ENCODE measurements at regions of chr7 and their contacts with region 1.

Region 1: DNA sequence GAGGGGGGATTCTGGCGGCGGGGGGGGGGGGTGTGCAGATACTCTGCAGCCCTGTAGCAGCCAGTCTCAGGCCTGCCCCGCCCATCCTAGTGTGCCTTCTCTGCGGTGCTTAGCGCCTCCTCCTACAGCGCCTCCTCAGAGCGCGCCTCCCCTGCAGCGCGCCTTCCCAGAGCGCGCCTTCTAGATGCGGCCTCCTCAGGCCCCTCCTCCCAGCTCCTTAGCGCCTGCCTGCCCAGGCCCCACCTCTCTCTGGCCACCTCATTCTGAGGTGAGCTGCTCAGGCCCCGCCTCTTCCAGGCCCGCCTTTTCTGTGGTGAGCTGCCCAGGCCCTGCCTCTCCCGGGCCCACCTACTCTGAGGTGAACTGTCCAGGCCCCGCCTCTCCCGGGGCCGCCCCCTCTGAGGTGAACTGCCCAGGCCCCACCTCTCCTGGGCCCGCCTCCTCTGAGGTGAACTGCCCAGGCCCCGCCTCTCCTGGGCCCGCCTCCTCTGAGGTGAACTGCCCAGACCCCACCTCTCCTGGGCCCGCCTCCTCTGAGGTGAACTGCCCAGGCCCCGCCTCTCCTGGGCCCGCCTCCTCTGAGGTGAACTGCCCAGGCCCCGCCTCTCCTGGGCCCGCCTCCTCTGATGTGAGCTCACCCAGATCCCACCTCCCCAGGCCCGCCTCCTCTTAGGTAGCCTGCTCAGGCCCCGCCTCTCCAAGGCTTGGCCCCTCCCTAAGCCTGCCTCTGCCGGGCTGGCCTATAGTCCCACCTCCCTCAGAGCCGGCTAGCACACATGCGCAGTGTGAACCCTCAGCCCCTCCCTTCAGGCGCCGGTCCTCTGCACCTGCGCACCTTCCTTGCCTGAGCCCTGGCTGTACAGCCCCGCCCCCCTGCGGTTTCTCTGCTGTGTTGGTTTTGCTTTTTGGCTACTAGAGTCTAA is 2.1 kb upstream of the SGCE start:
- DNase-seq: peak; percentile 96
- H3K4me3 ChIP-seq: peak overlapping the region in 2 of 3 experiments; percentile 37 to 49
- H3K27ac ChIP-seq: no peak overlapping the region
- H3K4me1 ChIP-seq: no peaks in the 10 kb centered on the region
- H3K27me3 ChIP-seq: no peaks in the 10 kb centered on the region
- CTCF ChIP-seq: peak in 1 of 2 donors; percentile 6

Region 2: GRCh38 chr7:94449148-94449725 is 208.8 kb before region 1 on chr7:
- CTCF ChIA-PET with region 1: interaction called, 4 read pairs
- dilution Hi-C with region 1: no loop called
- in situ Hi-C with region 1: no loop called
- intact Hi-C with region 1: loop called (anchors 1 kb)
- DNase-seq: peak; percentile 24
- H3K4me3 ChIP-seq: no peak overlapping the region
- H3K27ac ChIP-seq: no peak overlapping the region
- H3K4me1 ChIP-seq: no peaks in the 10 kb centered on the region
- H3K27me3 ChIP-seq: peaks cover 3% of the 10 kb centered on the region
- CTCF ChIP-seq: peak; percentile 45 to 65

Region 3: DNA sequence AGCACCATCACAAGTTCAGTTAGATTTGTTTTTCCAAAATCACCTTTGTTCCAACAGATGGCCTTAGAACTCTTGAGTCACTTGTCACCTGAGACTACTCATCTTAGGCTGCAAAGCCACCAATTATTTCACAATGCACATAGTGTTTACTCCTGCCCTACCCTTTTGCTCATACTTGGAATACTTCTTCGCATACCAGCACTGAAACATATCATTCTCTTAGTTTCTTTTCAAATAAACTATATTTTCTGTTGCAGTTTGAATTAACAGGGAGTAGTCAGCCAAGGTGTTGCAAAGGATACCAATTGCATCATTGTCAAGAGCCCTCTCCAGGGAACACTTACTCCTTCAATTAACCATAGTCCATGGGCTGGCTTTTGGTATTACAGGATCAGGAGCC is 77.4 kb before region 1 on chr7:
- CTCF ChIA-PET with region 1: no interaction called
- dilution Hi-C with region 1: no loop called
- in situ Hi-C with region 1: no loop called
- intact Hi-C with region 1: loop called (anchors 2 kb)
- DNase-seq: peak; percentile 31
- H3K4me3 ChIP-seq: no peak overlapping the region
- H3K27ac ChIP-seq: no peak overlapping the region
- H3K4me1 ChIP-seq: peaks cover 9% of the 10 kb centered on the region
- H3K27me3 ChIP-seq: no peaks in the 10 kb centered on the region
- CTCF ChIP-seq: no peak

Region 4: GRCh38 chr7:94687076-94687475 is 29.0 kb after region 1 on chr7:
- CTCF ChIA-PET with region 1: no interaction called
- dilution Hi-C with region 1: no loop called
- in situ Hi-C with region 1: no loop called
- intact Hi-C with region 1: no loop called
- DNase-seq: no peak
- H3K4me3 ChIP-seq: no peak overlapping the region
- H3K27ac ChIP-seq: no peak overlapping the region
- H3K4me1 ChIP-seq: peaks cover 3% of the 10 kb centered on the region
- H3K27me3 ChIP-seq: no peaks in the 10 kb centered on the region
- CTCF ChIP-seq: no peak

Region 5: DNA sequence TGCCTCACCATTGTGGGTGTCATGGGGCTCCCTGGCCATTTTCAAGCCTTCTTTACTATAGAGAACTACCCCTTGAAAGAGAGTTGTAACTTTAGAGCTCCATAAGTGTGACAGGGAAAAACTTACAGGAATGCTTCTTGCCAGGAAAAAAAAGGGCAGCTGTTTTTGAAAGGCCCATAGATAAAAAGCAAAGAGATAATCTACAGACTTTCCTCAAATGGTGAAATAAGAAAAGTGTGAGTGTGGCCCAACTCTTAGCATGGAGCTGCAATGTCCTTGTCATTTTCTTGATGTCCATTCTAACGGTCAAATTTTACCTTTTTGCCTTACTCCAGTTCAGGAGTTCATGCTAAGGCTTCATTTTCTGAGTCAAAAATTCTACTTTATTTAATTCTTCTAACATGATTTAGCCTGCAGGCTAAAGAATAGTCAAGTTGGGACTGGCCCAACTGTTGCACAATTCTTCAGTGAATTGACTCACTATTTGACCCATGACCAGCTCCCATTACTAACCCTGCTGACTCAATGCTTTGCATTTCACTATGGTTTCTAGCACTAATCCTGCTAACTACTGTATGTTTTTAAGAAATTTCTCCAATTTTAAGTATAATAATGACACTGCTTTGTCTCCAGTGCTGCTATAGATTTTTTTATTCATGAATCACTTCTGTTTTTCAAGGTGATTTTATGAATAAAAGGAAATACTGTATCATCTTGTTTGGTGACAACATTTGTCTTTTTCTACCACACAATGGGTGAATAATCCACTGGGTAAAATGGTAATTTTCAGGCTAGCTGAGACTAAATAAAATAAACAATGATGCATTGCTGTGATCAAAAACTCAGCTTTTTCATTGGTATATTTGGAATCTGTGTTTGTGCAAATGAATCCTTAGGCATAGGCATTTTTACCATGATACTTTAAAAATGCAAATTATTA is 39.3 kb after region 1 on chr7:
- CTCF ChIA-PET with region 1: no interaction called
- dilution Hi-C with region 1: no loop called
- in situ Hi-C with region 1: no loop called
- intact Hi-C with region 1: loop called (anchors 2 kb)
- DNase-seq: peak; percentile 90
- H3K4me3 ChIP-seq: no peak overlapping the region
- H3K27ac ChIP-seq: peak overlapping the region; percentile 95
- H3K4me1 ChIP-seq: peaks cover 38% of the 10 kb centered on the region
- H3K27me3 ChIP-seq: peaks cover 2% of the 10 kb centered on the region
- CTCF ChIP-seq: no peak

Region 6: GRCh38 chr7:95045236-95045923 is 387.3 kb after region 1 on chr7:
- CTCF ChIA-PET with region 1: no interaction called
- dilution Hi-C with region 1: no loop called
- in situ Hi-C with region 1: no loop called
- intact Hi-C with region 1: loop called (anchors 5 kb)
- DNase-seq: peak; percentile 1
- H3K4me3 ChIP-seq: no peak overlapping the region
- H3K27ac ChIP-seq: no peak overlapping the region
- H3K4me1 ChIP-seq: no peaks in the 10 kb centered on the region
- H3K27me3 ChIP-seq: peaks cover 2% of the 10 kb centered on the region
- CTCF ChIP-seq: peak in 1 of 2 donors; percentile 46

Region 7: DNA sequence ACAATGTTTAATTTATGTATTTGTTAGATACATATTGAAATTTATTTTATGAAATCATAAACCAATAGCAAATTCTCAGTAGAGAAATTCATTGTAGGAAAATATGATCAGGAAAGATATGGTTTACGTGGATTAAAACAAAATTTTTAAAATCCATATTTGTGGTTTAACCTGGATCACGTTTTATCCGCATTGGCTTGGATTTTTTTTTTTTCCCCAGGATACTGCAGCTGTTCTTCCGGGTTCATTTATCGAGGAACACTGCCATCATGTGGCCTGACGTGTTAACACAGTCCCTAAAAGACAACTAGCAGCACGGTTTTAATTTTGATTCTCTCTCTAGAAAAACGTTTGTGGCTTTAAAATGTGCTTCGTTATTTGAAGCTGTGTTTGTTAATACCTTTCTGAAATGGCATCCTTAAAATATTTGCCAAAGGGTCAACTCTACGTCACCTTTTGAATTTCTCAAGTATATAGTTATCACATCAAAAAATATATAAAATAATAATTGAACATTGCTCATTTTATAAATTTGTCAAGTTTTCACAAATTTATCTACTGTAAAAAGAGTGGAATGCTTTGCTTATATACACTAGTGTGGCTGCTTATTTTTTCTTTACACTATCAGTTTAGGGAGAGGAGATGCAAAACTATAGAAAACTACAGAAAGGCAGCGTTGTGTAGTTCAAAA is 819.0 kb after region 1 on chr7:
- CTCF ChIA-PET with region 1: no interaction called
- dilution Hi-C with region 1: no loop called
- in situ Hi-C with region 1: no loop called
- intact Hi-C with region 1: loop called (anchors 10 kb)
- DNase-seq: peak; percentile 37
- H3K4me3 ChIP-seq: no peak overlapping the region
- H3K27ac ChIP-seq: no peak overlapping the region
- H3K4me1 ChIP-seq: no peaks in the 10 kb centered on the region
- H3K27me3 ChIP-seq: no peaks in the 10 kb centered on the region
- CTCF ChIP-seq: peak; percentile 75 to 82